ENCODE measurements at regions of chr10 and their contacts with region 1.

Region 1: GRCh38 chr10:100998991-100999741 is 442 bp upstream of the LZTS2 start:
- DNase-seq: no peak
- ATAC-seq: peak; percentile 75
- H3K4me3 ChIP-seq: peak overlapping the region; percentile 86
- H3K27ac ChIP-seq: peak overlapping the region; percentile 88
- H3K4me1 ChIP-seq: peaks cover 17% of the 10 kb centered on the region
- H3K27me3 ChIP-seq: no peaks in the 10 kb centered on the region
- CTCF ChIP-seq: peak; percentile 79 to 87 (median 81)
- EP300 ChIP-seq: no peak
- POLR2A ChIP-seq: peak; percentile 77
- RAD21 ChIP-seq: no peak

Region 2: GRCh38 chr10:100912605-100913469 is 86.3 kb before region 1 on chr10 and contains the start of gene SLF2:
- CTCF ChIA-PET with region 1: interaction called, 19 read pairs
- POLR2A ChIA-PET with region 1: interaction called, 4 read pairs
- RAD21 ChIA-PET with region 1: interaction called, 6 read pairs
- SMC1A ChIA-PET with region 1: no interaction called
- in situ Hi-C with region 1: no loop called
- intact Hi-C with region 1: loop called (anchors 5 kb)
- DNase-seq: peak; percentile 96
- ATAC-seq: peak; percentile 97
- H3K4me3 ChIP-seq: peak within 1 kb of the TSS; percentile 92
- H3K27ac ChIP-seq: peak within 1 kb of the TSS; percentile 84
- H3K4me1 ChIP-seq: no peaks in the 10 kb centered on the region
- H3K27me3 ChIP-seq: no peaks in the 10 kb centered on the region
- CTCF ChIP-seq: no peak
- EP300 ChIP-seq: no peak
- POLR2A ChIP-seq: peak; percentile 92
- RAD21 ChIP-seq: no peak
- polyA plus RNA-seq, gene SLF2: 3.0 to 3.1 TPM

Region 3: DNA sequence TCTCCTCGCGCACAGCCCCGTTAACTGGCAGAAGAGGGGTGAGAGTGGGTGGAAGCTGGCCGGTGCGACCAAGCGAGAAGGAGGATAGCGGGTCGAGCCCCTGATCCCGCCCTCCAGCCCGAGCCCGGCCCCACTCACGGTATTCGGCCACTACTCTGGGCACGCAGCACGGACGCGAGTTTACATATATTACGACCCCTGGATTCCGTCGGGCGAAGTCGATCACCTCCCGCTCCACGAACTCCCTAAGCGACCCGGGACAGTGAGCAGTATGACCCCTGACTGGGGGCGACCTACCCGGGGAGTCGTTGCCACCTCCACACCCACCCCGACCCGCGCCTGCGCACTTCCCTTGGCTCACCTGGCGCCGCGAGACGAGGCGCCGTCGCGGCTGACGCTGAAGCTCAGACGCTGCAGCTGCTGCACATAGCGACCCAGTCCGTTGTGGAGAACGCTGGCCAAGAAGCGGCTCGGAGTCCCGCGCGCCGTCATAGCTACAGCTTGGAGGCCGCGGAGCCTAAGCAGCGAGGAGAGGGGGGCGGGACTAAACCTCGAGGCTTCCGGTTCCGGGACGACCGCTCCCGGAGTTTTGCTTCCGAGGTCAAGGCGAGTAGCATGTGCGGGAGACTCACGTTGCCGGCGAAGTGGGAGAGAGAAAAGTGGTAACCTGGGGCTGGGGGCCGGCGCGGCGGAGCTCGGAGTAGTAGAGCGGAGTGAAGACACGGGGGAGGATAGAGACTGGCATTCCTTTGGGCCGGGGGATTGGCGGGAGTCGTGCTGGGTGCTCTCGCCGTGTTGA is 12.0 kb before region 1 on chr10 and contains the starts of genes MRPL43 and TWNK:
- CTCF ChIA-PET with region 1: interaction called, 42 read pairs
- POLR2A ChIA-PET with region 1: interaction called, 23 read pairs
- RAD21 ChIA-PET with region 1: interaction called, 11 read pairs
- SMC1A ChIA-PET with region 1: interaction called, 5 read pairs
- in situ Hi-C with region 1: no loop called
- intact Hi-C with region 1: no loop called
- DNase-seq: no peak
- ATAC-seq: peak; percentile 96
- H3K4me3 ChIP-seq: peak within 1 kb of the TSS; percentile 98
- H3K27ac ChIP-seq: peak within 1 kb of the TSS; percentile 71
- H3K4me1 ChIP-seq: peaks cover 16% of the 10 kb centered on the region
- H3K27me3 ChIP-seq: no peaks in the 10 kb centered on the region
- CTCF ChIP-seq: no peak
- EP300 ChIP-seq: no peak
- POLR2A ChIP-seq: peak; percentile 94
- RAD21 ChIP-seq: no peak
- polyA plus RNA-seq, gene MRPL43: 16.6 to 24.2 TPM
- polyA plus RNA-seq, gene TWNK: 13.6 to 19.0 TPM

Region 4: DNA sequence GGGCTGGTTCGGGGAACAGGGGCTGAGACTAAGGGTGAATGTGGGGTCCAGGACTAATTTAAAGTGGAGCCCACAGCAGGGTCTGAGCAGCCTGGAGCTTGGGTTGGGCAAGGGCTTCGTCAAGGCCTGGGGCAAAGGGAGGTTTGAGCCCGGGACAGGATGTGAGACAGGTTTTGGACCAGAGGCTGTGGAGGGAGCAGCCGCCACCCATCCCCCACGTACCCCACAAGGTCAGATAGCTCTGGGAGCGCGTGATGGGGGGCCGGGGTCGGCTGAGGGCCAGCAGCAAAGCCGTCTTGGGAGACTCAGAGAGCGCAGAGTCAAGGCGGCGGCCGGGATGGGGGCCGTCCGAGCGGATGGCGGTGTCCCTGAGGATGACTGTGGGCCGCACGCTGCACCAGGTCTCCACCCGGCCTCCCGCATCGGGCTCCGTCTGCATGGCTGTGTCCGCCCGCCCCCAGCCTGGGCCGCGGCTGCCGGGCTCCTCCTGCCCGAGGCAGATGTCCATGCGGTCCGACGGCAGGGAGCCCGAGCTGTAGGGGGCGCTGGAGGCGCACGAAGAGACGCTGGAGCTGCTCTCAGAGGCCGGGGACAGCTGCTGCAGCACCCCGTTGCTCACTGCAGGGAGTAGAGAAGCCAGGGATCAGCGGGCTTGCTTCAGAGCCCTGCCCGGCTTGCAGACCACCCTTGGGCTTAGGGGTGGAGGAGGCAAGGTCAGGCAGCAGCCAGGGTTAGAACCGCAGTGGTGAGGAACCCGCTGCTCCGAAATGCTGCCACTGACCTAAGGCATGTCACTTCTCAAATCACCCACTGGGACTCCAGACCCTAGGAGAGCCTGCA is 19.7 kb after region 1 on chr10:
- CTCF ChIA-PET with region 1: interaction called, 91 read pairs
- POLR2A ChIA-PET with region 1: interaction called, 11 read pairs
- RAD21 ChIA-PET with region 1: interaction called, 26 read pairs
- SMC1A ChIA-PET with region 1: interaction called, 9 read pairs
- in situ Hi-C with region 1: no loop called
- intact Hi-C with region 1: no loop called
- DNase-seq: no peak
- ATAC-seq: peak; percentile 87
- H3K4me3 ChIP-seq: no peak overlapping the region
- H3K27ac ChIP-seq: no peak overlapping the region
- H3K4me1 ChIP-seq: peaks cover 9% of the 10 kb centered on the region
- H3K27me3 ChIP-seq: peaks cover 10% of the 10 kb centered on the region in 2 experiments
- CTCF ChIP-seq: peak; percentile 61 to 77 (median 61)
- EP300 ChIP-seq: no peak
- POLR2A ChIP-seq: no peak
- RAD21 ChIP-seq: peak; percentile 43; the same call in 1 of the 2 replicates

Region 5: DNA sequence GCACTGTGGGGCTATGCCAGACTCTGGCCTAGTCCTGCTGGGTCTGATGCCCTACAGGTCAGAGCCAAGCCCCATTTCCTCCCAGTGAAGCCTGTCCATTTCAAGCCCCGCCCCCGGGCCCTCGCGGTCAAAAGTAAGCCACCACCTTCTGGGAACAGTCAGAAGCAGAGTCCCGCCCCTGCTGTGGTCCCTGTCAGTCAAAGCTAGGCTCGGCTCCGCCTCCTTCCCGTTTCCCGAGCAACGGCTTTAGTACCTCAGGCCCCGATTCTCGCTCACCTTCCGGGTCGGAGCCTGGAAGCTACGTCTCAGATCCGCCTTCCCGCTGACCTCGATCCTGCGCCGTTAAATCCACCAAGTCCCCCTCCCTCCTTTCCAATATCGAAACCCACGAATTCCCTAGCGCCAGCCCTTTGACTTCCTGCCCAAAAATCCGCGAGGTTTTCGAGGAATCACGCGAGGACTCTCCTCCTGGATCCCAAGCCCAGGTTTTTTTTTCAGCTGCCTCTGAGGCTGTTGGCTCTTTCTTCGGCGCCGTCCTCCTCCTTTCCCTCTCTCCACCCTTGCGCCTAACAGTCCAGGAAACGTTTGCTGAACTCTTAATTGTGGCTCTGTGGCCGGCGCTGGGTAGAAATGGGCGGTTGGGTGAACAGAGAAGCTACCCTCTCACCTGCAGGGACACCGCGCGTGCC is 43.6 kb after region 1 on chr10:
- CTCF ChIA-PET with region 1: interaction called, 12 read pairs
- POLR2A ChIA-PET with region 1: interaction called, 3 read pairs
- RAD21 ChIA-PET with region 1: interaction called, 3 read pairs
- SMC1A ChIA-PET with region 1: interaction called, 4 read pairs
- in situ Hi-C with region 1: no loop called
- intact Hi-C with region 1: no loop called
- DNase-seq: peak; percentile 83
- ATAC-seq: peak; percentile 96
- H3K4me3 ChIP-seq: peak overlapping the region; percentile 63
- H3K27ac ChIP-seq: peak overlapping the region; percentile 7; the same call in 1 of the 2 replicates
- H3K4me1 ChIP-seq: peaks cover 5% of the 10 kb centered on the region; the same call in 1 of the 2 replicates
- H3K27me3 ChIP-seq: no peaks in the 10 kb centered on the region; a peak in 1 of 4 replicates
- CTCF ChIP-seq: no peak
- EP300 ChIP-seq: no peak
- POLR2A ChIP-seq: peak; percentile 87
- RAD21 ChIP-seq: no peak